ENCODE measurements at regions of chr1 and their contacts with region 1.

Region 1: GRCh38 chr1:7783826-7784491 is at the start of gene PER3:
- DNase-seq: peak; percentile 95 to 100 (median 98)
- H3K4me3 ChIP-seq: peak within 1 kb of the TSS; percentile 66 to 96 (median 85)
- H3K27ac ChIP-seq: peak within 1 kb of the TSS; percentile 67 to 99 (median 95)
- H3K27me3 ChIP-seq: no peaks in the 10 kb centered on the region
- CTCF ChIP-seq: no peak
- total RNA-seq, gene PER3: 31.2 to 79.2 (median 50.5) TPM

Region 2: GRCh38 chr1:7770997-7771822 is 12.7 kb before region 1 on chr1 and contains the start of gene VAMP3:
- intact Hi-C with region 1: loop called in 1 of 2 experiments (anchors 1 kb)
- DNase-seq: peak; percentile 72 to 92 (median 86)
- H3K4me3 ChIP-seq: peak within 1 kb of the TSS; percentile 72 to 98 (median 90)
- H3K27ac ChIP-seq: peak within 1 kb of the TSS; percentile 72 to 97 (median 92)
- H3K27me3 ChIP-seq: no peaks in the 10 kb centered on the region
- CTCF ChIP-seq: peak in 11 of 56 donors; percentile 10 to 37 (median 18)
- total RNA-seq, gene VAMP3: 51.7 to 189 (median 84.7) TPM

Region 3: GRCh38 chr1:7902478-7903085 is 118.6 kb after region 1 on chr1:
- intact Hi-C with region 1: loop called in 1 of 2 experiments (anchors 10 kb)
- DNase-seq: peak; percentile 28 to 74 (median 56)
- H3K4me3 ChIP-seq: peak overlapping the region in 39 of 59 donors; percentile 5 to 51 (median 35)
- H3K27ac ChIP-seq: peak overlapping the region in 1 of 59 donors; percentile 31
- H3K27me3 ChIP-seq: no peaks in the 10 kb centered on the region
- CTCF ChIP-seq: peak; percentile 34 to 80 (median 70)